Transverse colon (tissue), 4 donors: ENCODE measurements at regions of chr14 and their contacts with region 1.

Region 1: GRCh38 chr14:104150136-104151027 is 12.0 kb downstream of the KIF26A start:
- DNase-seq: no peak
- H3K4me3 ChIP-seq: no peak overlapping the region
- H3K27ac ChIP-seq: no peak overlapping the region
- H3K4me1 ChIP-seq: peaks cover 0 to 5% (median 2%) of the 10 kb centered on the region in 4 donors
- H3K27me3 ChIP-seq: no peaks in the 10 kb centered on the region
- CTCF ChIP-seq: no peak
- EP300 ChIP-seq: no peak
- POLR2A ChIP-seq: no peak

Region 2: DNA sequence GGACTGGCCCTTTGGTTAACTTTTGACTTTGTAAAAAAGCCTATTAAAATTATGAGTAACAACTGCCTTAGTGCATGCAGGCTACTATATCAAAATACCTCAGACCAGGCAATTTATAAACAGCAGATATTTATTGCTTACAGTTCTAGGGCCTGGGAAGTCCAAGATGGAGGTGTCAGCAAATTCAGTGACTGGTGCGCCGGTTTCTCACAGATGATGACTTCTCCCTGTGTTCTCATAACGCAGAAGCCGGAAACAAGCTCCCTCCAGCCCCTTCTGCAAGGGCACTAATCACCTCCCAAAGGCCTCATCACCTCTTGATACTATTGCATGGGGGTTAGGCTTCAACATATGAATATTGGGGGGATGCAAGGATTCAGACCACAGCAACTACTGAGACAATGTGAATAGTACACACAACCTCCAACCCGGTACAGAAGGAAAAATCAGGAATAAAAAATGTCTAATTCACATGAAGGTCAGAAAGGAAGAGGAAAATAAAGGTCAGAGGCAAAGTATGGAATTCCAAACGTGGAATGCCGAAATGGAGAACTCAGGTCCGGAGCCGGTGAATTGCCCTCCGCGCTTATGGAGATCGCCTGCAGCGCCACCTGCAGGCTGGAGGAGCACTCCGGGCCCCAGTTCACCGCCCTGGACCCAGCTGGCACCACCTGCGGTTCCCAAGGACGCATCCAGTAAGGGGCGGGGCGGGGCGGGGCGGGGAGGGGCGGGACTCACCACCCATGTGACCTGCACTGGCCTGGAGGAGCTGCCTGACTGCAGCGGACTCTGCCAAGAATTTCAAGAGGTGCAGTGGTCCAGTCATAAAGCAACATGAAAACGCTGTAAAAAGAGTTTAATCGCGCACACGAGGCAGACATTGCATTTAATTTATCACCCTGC is 191.4 kb after region 1 on chr14:
- in situ Hi-C with region 1: no loop called
- intact Hi-C with region 1: loop called (anchors 10 kb)
- DNase-seq: peak; percentile 87
- H3K4me3 ChIP-seq: no peak overlapping the region
- H3K27ac ChIP-seq: no peak overlapping the region
- H3K4me1 ChIP-seq: peaks cover 5 to 7% (median 6%) of the 10 kb centered on the region in 4 donors
- H3K27me3 ChIP-seq: peaks cover 27% of the 10 kb centered on the region
- CTCF ChIP-seq: peak; percentile 48 to 84 (median 68)
- EP300 ChIP-seq: no peak
- POLR2A ChIP-seq: no peak

Region 3: DNA sequence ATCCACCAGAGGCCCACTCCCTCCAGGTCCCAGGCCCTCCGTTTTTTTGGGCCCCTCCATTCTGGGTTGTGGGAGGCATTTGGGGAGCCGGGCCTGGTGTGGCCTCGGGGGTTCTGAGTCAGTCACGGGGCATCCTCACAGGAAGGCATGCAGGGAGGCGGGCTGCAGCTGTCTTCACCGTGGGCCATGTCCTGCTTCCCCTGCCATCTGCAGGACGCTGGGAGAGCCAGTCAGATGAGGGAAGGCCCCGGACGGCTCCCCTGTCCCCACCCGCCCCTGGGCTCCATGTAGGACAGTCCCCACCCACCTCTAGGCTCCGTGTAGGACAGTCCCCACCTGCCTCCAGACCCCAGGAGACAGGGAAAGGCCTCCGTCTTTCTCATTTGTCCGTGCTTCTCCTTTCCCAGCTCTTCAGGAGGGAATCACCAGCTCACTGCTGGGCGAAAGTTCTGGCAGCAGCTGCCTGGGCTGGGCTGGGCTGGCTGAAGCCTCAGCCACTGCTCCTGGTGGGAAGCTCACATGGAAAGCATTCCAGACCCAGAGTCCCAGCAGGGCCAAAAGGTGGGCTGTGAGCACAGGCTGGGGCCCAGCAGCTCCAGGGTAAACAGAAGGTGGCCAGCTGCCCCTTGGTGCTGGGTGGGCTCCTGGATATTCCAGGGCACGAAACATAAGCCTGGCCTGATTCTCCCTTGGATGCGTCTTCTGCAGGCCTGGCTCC is 205.8 kb after region 1 on chr14:
- in situ Hi-C with region 1: no loop called
- intact Hi-C with region 1: no loop called
- DNase-seq: no peak
- H3K4me3 ChIP-seq: no peak overlapping the region
- H3K27ac ChIP-seq: no peak overlapping the region
- H3K4me1 ChIP-seq: no peaks in the 10 kb centered on the region
- H3K27me3 ChIP-seq: no peaks in the 10 kb centered on the region
- CTCF ChIP-seq: no peak
- EP300 ChIP-seq: no peak
- POLR2A ChIP-seq: no peak